Endothelial cell of umbilical vein (primary cell): ENCODE measurements at regions of chr15 and their contacts with region 1.

Region 1: GRCh38 chr15:42696626-42697025 is 40.3 kb downstream of the CDAN1 start:
- DNase-seq: no peak
- H3K4me3 ChIP-seq: no peak overlapping the region
- H3K27ac ChIP-seq: no peak overlapping the region
- H3K4me1 ChIP-seq: no peaks in the 10 kb centered on the region
- H3K27me3 ChIP-seq: no peaks in the 10 kb centered on the region
- CTCF ChIP-seq: no peak
- POLR2A ChIP-seq: no peak

Region 2: GRCh38 chr15:41323611-41324010 is 1373.0 kb before region 1 on chr15:
- CTCF ChIA-PET with region 1: no interaction called
- POLR2A ChIA-PET with region 1: interaction called, 13 read pairs
- dilution Hi-C with region 1: no loop called
- intact Hi-C with region 1: no loop called
- DNase-seq: no peak
- H3K4me3 ChIP-seq: no peak overlapping the region
- H3K27ac ChIP-seq: no peak overlapping the region
- H3K4me1 ChIP-seq: no peaks in the 10 kb centered on the region
- H3K27me3 ChIP-seq: no peaks in the 10 kb centered on the region
- CTCF ChIP-seq: no peak
- POLR2A ChIP-seq: no peak

Region 3: DNA sequence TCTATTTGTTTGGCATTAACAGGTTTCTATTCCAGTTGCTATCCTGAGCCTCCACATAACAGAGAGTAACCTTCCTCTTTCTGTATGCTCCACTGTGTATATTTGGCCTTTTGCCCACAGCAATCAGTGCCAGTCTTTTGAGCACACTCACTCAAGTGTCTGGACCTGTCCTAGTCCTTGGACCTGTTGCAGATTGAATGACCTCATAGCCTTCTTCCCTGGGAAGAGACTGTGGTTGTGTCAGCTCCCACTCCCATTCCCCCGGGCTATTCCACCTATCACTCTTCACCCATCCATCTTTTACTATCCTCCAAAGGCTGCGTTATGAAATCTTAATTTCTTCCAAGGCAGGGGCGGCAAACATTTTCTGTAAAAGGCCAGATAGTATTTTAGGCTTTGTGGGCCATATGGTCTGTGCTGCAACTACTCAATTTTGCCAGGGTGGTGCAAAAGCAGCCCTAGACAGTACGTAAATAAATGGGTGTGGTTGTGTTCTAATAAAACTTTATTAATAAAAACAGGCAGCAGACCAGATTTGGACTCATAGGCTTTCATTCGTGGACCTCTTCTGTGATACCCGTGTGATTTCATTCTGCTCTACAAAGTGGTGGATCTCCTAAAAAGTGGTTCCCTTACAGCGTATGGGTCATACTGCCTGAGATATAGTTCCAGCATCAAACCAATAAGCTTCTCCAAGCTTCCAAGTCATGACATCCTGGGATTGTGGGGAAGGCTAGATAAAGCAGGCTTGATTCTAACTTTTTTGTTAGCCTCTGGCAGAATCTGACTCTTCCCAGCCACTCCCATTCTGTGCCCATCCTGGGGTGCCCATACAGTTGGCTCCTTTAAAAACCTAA is 17.1 kb before region 1 on chr15:
- CTCF ChIA-PET with region 1: no interaction called
- POLR2A ChIA-PET with region 1: no interaction called
- dilution Hi-C with region 1: no loop called
- intact Hi-C with region 1: no loop called
- DNase-seq: no peak
- H3K4me3 ChIP-seq: no peak overlapping the region
- H3K27ac ChIP-seq: no peak overlapping the region
- H3K4me1 ChIP-seq: no peaks in the 10 kb centered on the region
- H3K27me3 ChIP-seq: no peaks in the 10 kb centered on the region
- CTCF ChIP-seq: no peak
- POLR2A ChIP-seq: no peak